Esophagus muscularis mucosa (tissue), 4 donors: ENCODE measurements at regions of chr1 and their contacts with region 1.

Region 1: GRCh38 chr1:41516168-41517061 is 31.9 kb upstream of the EDN2 start:
- DNase-seq: peak; percentile 96
- H3K4me3 ChIP-seq: peak overlapping the region; percentile 54 to 60 (median 56)
- H3K27ac ChIP-seq: peak overlapping the region in 3 of 4 donors; percentile 13 to 61 (median 33)
- H3K4me1 ChIP-seq: peaks cover 18 to 23% (median 21%) of the 10 kb centered on the region in 4 donors
- H3K27me3 ChIP-seq: no peaks in the 10 kb centered on the region
- CTCF ChIP-seq: peak; percentile 89 to 90 (median 89)
- EP300 ChIP-seq: no peak
- POLR2A ChIP-seq: no peak

Region 2: DNA sequence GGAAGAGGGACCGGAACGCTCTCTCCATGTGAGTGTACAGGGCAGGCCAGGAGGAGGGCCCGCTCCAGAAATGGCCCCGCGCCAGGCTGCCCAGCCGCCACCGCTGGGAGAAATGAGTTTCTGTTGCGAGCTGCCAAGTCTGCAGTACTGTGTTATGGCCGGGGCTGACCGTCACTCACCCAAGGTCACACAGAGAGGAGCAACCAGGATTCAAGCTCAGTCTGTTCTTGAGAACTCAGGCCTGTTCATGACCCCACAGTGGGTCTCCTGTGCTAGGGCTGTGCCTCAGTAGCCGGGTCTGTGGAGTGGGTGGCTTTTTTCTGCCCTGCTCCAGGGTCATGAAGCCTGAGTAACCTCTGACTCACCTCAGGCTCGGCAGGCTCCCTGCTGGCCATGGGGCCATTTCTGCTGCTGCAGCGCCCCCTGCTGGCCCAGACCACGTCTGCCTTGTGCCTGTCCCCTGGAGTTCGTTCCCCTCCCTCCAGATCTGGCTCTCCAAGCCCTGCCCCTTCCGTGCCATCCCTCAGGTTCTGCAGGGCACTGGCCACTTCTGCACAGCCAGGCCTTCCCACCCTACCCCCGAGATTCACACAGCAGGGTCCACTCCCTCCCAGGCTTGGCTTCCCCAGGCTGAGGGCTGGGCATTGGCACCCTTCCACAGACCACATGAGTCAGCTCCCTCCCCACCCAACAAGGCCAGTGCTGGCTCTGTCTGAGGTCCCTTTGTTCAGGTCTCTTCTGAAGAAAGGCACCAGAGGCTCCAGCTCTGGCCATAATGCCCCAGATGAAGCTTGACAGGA is 83.7 kb before region 1 on chr1:
- intact Hi-C with region 1: loop called (anchors 5 kb)
- DNase-seq: peak; percentile 93
- H3K4me3 ChIP-seq: peak overlapping the region in 1 of 4 donors; percentile 0
- H3K27ac ChIP-seq: peak overlapping the region; percentile 53 to 67 (median 66)
- H3K4me1 ChIP-seq: peaks cover 24 to 45% (median 44%) of the 10 kb centered on the region in 4 donors
- H3K27me3 ChIP-seq: peaks cover 0 to 5% (median 0%) of the 10 kb centered on the region in 4 donors
- CTCF ChIP-seq: peak; percentile 70 to 84 (median 82)
- EP300 ChIP-seq: no peak
- POLR2A ChIP-seq: no peak